ENCODE measurements at regions of chr2 and their contacts with region 1.

Region 1: DNA sequence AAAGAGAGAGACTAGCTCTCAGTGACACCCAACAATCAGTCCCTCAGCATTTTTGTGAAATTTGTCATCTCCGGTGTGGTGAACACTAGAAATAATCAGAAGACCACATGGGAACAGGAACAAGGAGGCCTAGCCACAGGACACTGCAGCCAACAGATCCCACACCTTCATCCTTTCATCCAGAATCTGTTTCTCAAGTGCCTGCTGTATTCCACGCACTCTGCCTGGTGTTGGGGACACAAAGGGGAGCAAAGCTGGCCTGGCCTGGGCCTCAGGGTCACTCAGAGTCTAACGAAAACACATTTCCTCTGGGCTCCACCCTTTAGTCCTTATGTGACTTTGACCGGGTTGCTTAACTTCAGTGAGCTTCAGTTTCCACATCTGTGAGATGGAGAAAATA is 53.1 kb downstream of the EHD3 start:
- H3K4me3 ChIP-seq: no peak overlapping the region
- H3K27ac ChIP-seq: no peak overlapping the region
- H3K4me1 ChIP-seq: 0 out of 2 replicates have a peak, but pooled peaks cover 2% of the 10 kb centered on the region
- CTCF ChIP-seq: no peak

Region 2: DNA sequence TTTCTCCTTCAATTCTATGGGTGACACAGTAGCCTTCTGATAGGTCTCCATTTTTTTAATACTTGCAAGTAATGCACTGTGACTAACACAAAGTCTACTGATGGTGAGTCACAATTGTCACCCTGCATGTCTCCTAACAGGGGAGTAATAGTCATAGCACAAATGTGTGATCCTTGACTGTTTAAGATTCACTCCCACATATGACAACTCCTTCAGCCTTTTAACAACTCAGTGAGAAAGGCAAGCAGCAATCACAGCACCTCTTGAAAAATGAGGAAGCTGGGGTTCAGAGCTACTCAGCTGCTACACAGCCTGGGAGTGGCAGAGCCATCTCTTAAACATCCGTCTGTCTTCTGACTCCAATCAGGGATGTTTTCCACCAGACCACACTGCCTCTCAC is 10.7 kb after region 1 on chr2:
- CTCF ChIA-PET with region 1: no interaction called
- POLR2A ChIA-PET with region 1: interaction called, 10 read pairs
- H3K4me3 ChIP-seq: no peak overlapping the region
- H3K27ac ChIP-seq: no peak overlapping the region
- H3K4me1 ChIP-seq: no peaks in the 10 kb centered on the region
- CTCF ChIP-seq: no peak